ENCODE measurements at regions of chr16 and their contacts with region 1.

Region 1: GRCh38 chr16:11651796-11652195 is 16.5 kb upstream of the SNN start:
- DNase-seq: no peak
- ATAC-seq: peak; percentile 28
- H3K4me3 ChIP-seq: no peak overlapping the region
- H3K4me3 Mint-ChIP-seq: no peak overlapping the region
- H3K27ac ChIP-seq: no peak overlapping the region
- H3K27ac Mint-ChIP-seq: no peak overlapping the region
- H3K4me1 ChIP-seq: no peaks in the 10 kb centered on the region
- H3K4me1 Mint-ChIP-seq: peaks cover 11% of the 10 kb centered on the region
- H3K27me3 ChIP-seq: no peaks in the 10 kb centered on the region
- H3K27me3 Mint-ChIP-seq: no peaks in the 10 kb centered on the region
- CTCF ChIP-seq: no peak

Region 2: GRCh38 chr16:11632464-11632939 is 19.3 kb before region 1 on chr16:
- CTCF ChIA-PET with region 1: no interaction called
- POLR2A ChIA-PET with region 1: interaction called, 12 read pairs
- intact Hi-C with region 1: no loop called
- DNase-seq: no peak
- ATAC-seq: no peak
- H3K4me3 ChIP-seq: no peak overlapping the region
- H3K4me3 Mint-ChIP-seq: no peak overlapping the region
- H3K27ac ChIP-seq: no peak overlapping the region
- H3K27ac Mint-ChIP-seq: no peak overlapping the region
- H3K4me1 ChIP-seq: peaks cover 22 to 41% of the 10 kb centered on the region in 2 donors
- H3K4me1 Mint-ChIP-seq: peaks cover 33% of the 10 kb centered on the region
- H3K27me3 ChIP-seq: no peaks in the 10 kb centered on the region
- H3K27me3 Mint-ChIP-seq: no peaks in the 10 kb centered on the region
- CTCF ChIP-seq: no peak